HCT116 (cell line): ENCODE measurements at regions of chr12 and their contacts with region 1.

Region 1: DNA sequence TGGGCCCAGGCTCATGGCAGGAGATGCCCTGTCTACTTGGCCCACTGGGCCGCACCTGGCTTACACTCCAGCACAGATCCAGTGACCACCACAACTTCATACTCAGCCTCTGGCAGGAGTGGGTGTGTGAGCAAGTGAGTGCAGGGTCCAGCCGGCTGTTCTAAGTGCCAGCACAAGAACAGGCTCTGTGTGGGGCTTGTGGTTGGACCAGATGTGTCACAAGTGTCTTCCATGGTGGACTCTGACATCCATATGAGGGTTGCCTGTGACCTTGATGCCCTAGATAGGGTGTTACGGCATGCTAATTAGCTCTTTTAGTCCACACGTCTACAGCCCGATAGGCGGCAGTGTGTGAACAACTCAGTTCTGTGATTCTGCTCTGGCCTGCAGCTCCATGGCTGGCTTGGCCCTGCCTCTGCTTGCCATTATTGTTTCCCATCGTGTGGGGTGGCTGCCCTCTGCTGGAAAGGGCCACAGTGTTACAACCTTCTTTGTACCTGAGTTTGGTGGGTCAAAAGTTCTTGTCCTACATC is 1089.1 kb downstream of the SLC6A15 start:
- DNase-seq: peak; percentile 44
- ATAC-seq: peak; percentile 75
- H3K4me3 ChIP-seq: no peak overlapping the region
- H3K27ac ChIP-seq: no peak overlapping the region
- H3K4me1 ChIP-seq: peaks cover 0 to 4% of the 10 kb centered on the region in 2 experiments; a peak in 1 of 4 replicates
- H3K27me3 ChIP-seq: no peaks in the 10 kb centered on the region
- CTCF ChIP-seq: peak; percentile 60 to 69 (median 62)
- POLR2A ChIP-seq: no peak
- RAD21 ChIP-seq: peak; percentile 83

Region 2: DNA sequence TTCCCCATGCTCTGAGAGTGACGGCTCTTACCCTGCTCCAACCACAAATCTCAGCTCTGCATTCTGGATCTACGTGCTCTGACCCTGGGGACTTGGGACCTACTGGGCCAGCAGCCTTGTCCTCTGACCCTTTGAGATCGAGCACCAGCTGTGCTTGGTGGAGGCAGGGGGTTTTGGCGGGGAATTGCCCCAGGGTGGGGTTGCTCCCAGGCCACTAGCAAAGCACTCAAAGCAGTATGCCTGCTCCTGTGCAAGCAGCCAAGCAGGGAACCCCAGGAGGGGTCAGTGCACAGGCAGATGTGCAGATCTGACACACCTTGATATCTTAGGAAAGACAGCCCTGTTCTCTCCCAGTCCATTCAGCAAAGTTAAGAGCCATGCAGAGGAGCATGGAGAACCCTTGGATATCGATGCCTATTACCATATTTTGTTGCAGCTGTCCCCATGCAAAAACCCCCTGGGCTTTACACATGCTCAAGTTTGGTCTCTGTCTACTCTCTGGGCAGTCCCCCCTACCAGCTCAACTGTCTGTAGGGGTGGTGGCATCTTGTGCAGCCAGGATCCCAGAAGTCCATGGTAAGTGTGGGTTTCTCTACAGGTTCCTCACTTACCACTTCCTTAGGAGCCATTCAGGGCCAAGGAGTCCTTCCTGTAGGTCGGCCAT is 817.8 kb before region 1 on chr12:
- CTCF ChIA-PET with region 1: no interaction called
- POLR2A ChIA-PET with region 1: no interaction called
- RAD21 ChIA-PET with region 1: no interaction called
- intact Hi-C with region 1: loop called (anchors 1 kb)
- DNase-seq: no peak
- ATAC-seq: no peak
- H3K4me3 ChIP-seq: no peak overlapping the region
- H3K27ac ChIP-seq: no peak overlapping the region
- H3K4me1 ChIP-seq: no peaks in the 10 kb centered on the region
- H3K27me3 ChIP-seq: no peaks in the 10 kb centered on the region
- CTCF ChIP-seq: no peak
- POLR2A ChIP-seq: no peak
- RAD21 ChIP-seq: no peak

Region 3: GRCh38 chr12:84397263-84397662 is 573.8 kb after region 1 on chr12:
- CTCF ChIA-PET with region 1: interaction called, 5 read pairs
- POLR2A ChIA-PET with region 1: no interaction called
- RAD21 ChIA-PET with region 1: no interaction called
- intact Hi-C with region 1: loop called (anchors 5 kb)
- DNase-seq: no peak
- ATAC-seq: no peak
- H3K4me3 ChIP-seq: no peak overlapping the region
- H3K27ac ChIP-seq: no peak overlapping the region
- H3K4me1 ChIP-seq: no peaks in the 10 kb centered on the region
- H3K27me3 ChIP-seq: no peaks in the 10 kb centered on the region
- CTCF ChIP-seq: peak in 2 of 3 experiments; percentile 20 to 40; a peak in 3 of 6 replicates
- POLR2A ChIP-seq: no peak
- RAD21 ChIP-seq: peak; percentile 45